GM12878 (cell line): ENCODE measurements at regions of chr20 and their contacts with region 1.

Region 1: DNA sequence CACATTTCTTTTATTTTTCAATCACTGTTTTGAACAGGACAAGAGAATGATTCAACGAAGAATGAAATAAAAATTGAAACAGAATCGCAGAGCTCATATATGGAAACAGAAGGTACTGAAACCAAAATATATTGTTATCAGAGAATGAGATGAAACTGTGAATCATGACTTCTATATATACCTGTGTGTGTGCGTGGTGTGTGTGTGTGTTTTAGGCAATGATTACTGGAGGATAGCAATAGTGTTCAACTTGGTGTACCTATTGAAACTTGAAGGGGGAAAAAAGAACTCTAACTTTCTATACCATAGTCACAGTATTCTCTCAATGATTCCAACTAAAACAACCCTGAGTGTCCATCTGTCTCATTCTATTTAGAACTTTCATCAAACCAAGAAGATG is 586.6 kb downstream of the KIF16B start:
- DNase-seq: peak; percentile 72
- ATAC-seq: peak; percentile 92
- H3K4me3 ChIP-seq: peak overlapping the region; percentile 91
- H3K27ac ChIP-seq: peak overlapping the region; percentile 74
- H3K4me1 ChIP-seq: no peaks in the 10 kb centered on the region; the same call in 1 of the 2 replicates
- H3K27me3 ChIP-seq: no peaks in the 10 kb centered on the region
- CTCF ChIP-seq: no peak
- EP300 ChIP-seq: peak; percentile 68; a peak in 2 of 4 replicates
- POLR2A ChIP-seq: no peak
- RAD21 ChIP-seq: no peak

Region 2: GRCh38 chr20:15200147-15200565 is 786.5 kb before region 1 on chr20:
- CTCF ChIA-PET with region 1: no interaction called
- POLR2A ChIA-PET with region 1: no interaction called
- RAD21 ChIA-PET with region 1: no interaction called
- SMC1A ChIA-PET with region 1: no interaction called
- in situ Hi-C with region 1: no loop called
- intact Hi-C with region 1: no loop called
- DNase-seq: peak; percentile 51
- ATAC-seq: peak; percentile 85
- H3K4me3 ChIP-seq: no peak overlapping the region
- H3K27ac ChIP-seq: no peak overlapping the region
- H3K4me1 ChIP-seq: peaks cover 8% of the 10 kb centered on the region
- H3K27me3 ChIP-seq: no peaks in the 10 kb centered on the region
- CTCF ChIP-seq: no peak
- EP300 ChIP-seq: 0 out of 4 replicates have a peak, but pooled peaks of 1 of the 2 experiments have one; percentile 27
- POLR2A ChIP-seq: no peak
- RAD21 ChIP-seq: no peak

Region 3: DNA sequence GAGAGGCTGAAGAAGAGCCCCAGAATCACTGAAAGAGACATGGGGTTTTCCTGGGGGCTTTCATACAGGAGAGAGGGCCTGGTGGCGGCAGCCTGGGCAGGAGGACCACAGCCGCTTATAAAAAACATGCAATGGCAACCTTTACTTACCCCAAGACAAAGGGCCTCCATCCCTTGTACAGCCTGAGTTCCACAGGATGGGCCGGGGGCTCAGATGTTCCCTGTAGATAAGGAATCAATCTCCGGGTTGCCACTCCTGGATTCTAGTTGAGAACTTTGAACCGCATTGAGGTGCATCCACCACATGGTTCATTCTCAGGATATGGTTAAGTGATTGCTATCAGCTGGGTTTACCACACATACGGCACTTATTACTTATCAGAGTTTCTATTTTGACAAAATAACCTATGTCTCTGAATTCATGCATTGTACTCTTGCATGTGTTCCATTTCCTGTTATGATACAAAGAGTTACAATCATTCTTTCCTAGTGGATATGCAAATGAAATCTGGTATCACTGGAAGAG is 91.1 kb before region 1 on chr20:
- CTCF ChIA-PET with region 1: no interaction called
- POLR2A ChIA-PET with region 1: no interaction called
- RAD21 ChIA-PET with region 1: no interaction called
- SMC1A ChIA-PET with region 1: interaction called, 3 read pairs
- in situ Hi-C with region 1: no loop called
- intact Hi-C with region 1: loop called (anchors 5 kb)
- DNase-seq: peak; percentile 48
- ATAC-seq: peak; percentile 96
- H3K4me3 ChIP-seq: no peak overlapping the region
- H3K27ac ChIP-seq: no peak overlapping the region
- H3K4me1 ChIP-seq: no peaks in the 10 kb centered on the region
- H3K27me3 ChIP-seq: no peaks in the 10 kb centered on the region
- CTCF ChIP-seq: no peak
- EP300 ChIP-seq: peak; percentile 84 to 85
- POLR2A ChIP-seq: no peak
- RAD21 ChIP-seq: no peak

Region 4: GRCh38 chr20:16069389-16070010 is 82.8 kb after region 1 on chr20:
- CTCF ChIA-PET with region 1: no interaction called
- POLR2A ChIA-PET with region 1: no interaction called
- RAD21 ChIA-PET with region 1: interaction called, 4 read pairs
- SMC1A ChIA-PET with region 1: no interaction called
- in situ Hi-C with region 1: no loop called
- intact Hi-C with region 1: loop called (anchors 5 kb)
- DNase-seq: peak; percentile 43
- ATAC-seq: peak; percentile 95
- H3K4me3 ChIP-seq: no peak overlapping the region
- H3K27ac ChIP-seq: no peak overlapping the region
- H3K4me1 ChIP-seq: no peaks in the 10 kb centered on the region; the same call in 1 of the 2 replicates
- H3K27me3 ChIP-seq: no peaks in the 10 kb centered on the region
- CTCF ChIP-seq: no peak
- EP300 ChIP-seq: peak; percentile 68 to 73; a peak in 2 of 4 replicates
- POLR2A ChIP-seq: no peak
- RAD21 ChIP-seq: no peak

Region 5: GRCh38 chr20:16434062-16434664 is 447.5 kb after region 1 on chr20:
- CTCF ChIA-PET with region 1: no interaction called
- POLR2A ChIA-PET with region 1: no interaction called
- RAD21 ChIA-PET with region 1: no interaction called
- SMC1A ChIA-PET with region 1: no interaction called
- in situ Hi-C with region 1: no loop called
- intact Hi-C with region 1: loop called (anchors 10 kb)
- DNase-seq: peak; percentile 63
- ATAC-seq: peak; percentile 100
- H3K4me3 ChIP-seq: no peak overlapping the region
- H3K27ac ChIP-seq: no peak overlapping the region
- H3K4me1 ChIP-seq: no peaks in the 10 kb centered on the region
- H3K27me3 ChIP-seq: no peaks in the 10 kb centered on the region
- CTCF ChIP-seq: peak; percentile 65 to 87 (median 75)
- EP300 ChIP-seq: peak in 1 of 2 experiments; percentile 41; a peak in 1 of 4 replicates
- POLR2A ChIP-seq: no peak
- RAD21 ChIP-seq: peak; percentile 50